ENCODE measurements at regions of chr7 and their contacts with region 1.

Region 1: GRCh38 chr7:151648429-151648828 is 128.7 kb upstream of the RHEB start:
- DNase-seq: no peak
- ATAC-seq: no peak
- H3K4me3 ChIP-seq: no peak overlapping the region
- H3K27ac ChIP-seq: no peak overlapping the region
- H3K4me1 ChIP-seq: peaks cover 0 to 2% of the 10 kb centered on the region in 2 donors
- H3K27me3 ChIP-seq: no peaks in the 10 kb centered on the region

Region 2: DNA sequence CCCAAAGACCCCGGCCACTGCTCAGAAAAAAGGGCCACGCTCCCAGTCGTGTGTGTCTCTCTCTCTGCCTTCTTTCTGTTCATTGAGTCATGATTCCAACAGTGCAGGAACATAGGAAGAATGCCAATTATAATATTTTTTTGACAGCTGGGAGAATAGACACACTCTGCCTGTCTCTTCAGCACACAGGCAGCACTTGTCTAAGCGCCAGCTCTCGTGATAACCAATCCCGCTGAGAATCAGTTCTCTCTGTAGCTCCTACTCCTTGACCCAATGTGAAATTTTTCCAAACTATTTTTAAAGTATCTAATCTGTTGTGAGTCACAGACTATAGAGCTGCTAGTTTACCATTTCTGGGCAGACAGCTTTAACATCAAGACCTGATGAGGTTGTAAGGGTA is 16.9 kb after region 1 on chr7:
- intact Hi-C with region 1: loop called in 1 of 2 experiments (anchors 1 kb)
- DNase-seq: peak; percentile 77 to 89
- ATAC-seq: peak; percentile 68
- H3K4me3 ChIP-seq: no peak overlapping the region
- H3K27ac ChIP-seq: peak overlapping the region in 1 of 2 donors; percentile 62
- H3K4me1 ChIP-seq: peaks cover 4 to 5% of the 10 kb centered on the region in 2 donors
- H3K27me3 ChIP-seq: no peaks in the 10 kb centered on the region

Region 3: DNA sequence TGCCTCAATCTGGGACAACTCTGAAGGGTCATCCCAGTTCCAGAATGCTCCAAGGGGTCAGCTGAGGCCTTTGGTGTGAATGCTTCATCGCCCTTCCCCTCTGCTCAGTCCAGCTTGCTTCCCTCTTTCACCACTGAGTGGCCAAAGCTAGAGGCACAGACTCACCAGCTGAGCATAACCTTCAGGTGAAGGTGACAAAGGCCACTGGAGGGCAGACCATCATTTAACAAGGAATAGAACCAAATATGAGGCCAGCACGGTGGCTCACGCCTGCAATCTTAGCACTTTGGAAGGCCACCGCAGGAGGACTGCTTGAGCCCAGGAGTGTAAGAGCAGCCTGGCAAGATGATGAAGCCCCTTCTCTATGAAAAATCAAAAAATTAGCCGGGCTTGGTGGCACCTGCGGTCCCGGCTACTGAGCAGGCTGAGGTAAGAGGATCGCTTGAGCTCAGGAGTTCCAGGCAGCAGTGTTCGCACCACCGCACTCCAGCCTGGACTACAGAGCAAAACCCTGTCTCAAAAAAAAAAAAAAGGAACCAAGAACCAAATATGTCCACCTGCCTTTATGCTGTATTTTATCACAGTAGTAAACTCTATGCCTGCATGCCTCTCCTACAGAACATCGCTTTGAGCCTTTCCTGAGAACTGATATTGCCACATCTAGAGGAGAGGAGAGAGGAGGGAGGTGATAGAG is 215.1 kb after region 1 on chr7:
- intact Hi-C with region 1: no loop called
- DNase-seq: peak; percentile 22 to 35
- ATAC-seq: no peak
- H3K4me3 ChIP-seq: no peak overlapping the region
- H3K27ac ChIP-seq: no peak overlapping the region
- H3K4me1 ChIP-seq: no peaks in the 10 kb centered on the region
- H3K27me3 ChIP-seq: no peaks in the 10 kb centered on the region

Region 4: DNA sequence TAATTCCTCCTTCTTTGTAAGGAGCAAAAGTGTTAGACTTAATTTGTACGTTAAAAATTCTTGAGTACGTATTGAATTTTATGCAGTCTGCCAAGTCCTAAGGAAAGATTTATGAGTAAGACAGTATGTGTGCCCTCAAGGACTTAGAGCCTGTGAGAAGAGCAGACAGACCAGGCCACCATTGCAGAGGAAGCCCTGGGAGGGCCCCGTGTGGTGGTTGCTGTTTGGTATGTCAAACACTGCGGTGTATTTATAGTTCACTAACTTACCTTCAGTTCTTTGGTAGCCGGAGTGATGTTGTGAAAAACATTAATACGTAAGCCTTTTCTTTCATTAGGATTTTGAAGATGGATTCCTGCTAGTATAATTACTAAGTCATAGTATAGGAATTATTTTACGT is 459.9 kb after region 1 on chr7:
- intact Hi-C with region 1: no loop called
- DNase-seq: no peak
- ATAC-seq: no peak
- H3K4me3 ChIP-seq: no peak overlapping the region
- H3K27ac ChIP-seq: no peak overlapping the region
- H3K4me1 ChIP-seq: no peaks in the 10 kb centered on the region
- H3K27me3 ChIP-seq: no peaks in the 10 kb centered on the region

Measured in aorta (tissue), 5 donors.